ENCODE measurements at regions of chrX and their contacts with region 1.

Region 1: DNA sequence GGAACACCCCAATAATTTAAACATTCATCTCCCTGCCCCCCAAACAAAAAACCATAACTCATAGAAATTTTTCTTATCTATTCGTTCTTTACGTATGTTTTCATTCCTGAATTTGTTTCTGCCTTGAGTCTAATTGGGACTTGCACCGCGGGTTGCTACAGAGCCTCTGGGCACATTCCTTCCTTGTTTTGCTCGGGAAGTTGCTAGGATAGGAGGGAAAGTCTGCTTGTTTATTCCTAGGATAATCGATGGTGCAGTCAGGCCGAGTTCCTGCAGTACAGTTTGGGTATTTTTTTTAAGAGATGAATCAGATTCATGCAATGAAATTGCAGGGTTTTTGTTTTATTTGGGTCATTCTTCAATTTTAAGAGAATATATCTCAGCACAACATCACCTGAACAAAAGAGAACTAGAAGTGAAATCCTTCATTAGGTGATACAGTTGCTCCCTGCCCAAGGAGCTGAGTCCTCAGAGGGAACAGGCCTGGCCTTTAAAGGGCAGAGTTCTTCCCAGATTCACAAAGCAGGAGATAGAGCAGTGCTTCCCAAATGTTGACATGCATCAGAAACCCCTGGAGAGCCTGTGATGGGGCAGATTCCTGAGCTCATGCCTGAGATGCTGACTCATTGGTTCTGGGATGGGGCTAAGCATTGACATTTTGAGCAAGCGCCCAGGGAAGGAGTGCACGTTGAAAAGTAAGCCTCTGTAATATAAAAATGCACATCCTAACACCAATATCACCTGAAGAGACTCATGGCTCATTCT is 114.9 kb upstream of the FAM9B start:
- DNase-seq: peak; percentile 41
- H3K4me3 ChIP-seq: no peak overlapping the region
- H3K27ac ChIP-seq: peak overlapping the region; percentile 21
- H3K4me1 ChIP-seq: peaks cover 29% of the 10 kb centered on the region
- H3K27me3 ChIP-seq: no peaks in the 10 kb centered on the region
- CTCF ChIP-seq: no peak

Region 2: DNA sequence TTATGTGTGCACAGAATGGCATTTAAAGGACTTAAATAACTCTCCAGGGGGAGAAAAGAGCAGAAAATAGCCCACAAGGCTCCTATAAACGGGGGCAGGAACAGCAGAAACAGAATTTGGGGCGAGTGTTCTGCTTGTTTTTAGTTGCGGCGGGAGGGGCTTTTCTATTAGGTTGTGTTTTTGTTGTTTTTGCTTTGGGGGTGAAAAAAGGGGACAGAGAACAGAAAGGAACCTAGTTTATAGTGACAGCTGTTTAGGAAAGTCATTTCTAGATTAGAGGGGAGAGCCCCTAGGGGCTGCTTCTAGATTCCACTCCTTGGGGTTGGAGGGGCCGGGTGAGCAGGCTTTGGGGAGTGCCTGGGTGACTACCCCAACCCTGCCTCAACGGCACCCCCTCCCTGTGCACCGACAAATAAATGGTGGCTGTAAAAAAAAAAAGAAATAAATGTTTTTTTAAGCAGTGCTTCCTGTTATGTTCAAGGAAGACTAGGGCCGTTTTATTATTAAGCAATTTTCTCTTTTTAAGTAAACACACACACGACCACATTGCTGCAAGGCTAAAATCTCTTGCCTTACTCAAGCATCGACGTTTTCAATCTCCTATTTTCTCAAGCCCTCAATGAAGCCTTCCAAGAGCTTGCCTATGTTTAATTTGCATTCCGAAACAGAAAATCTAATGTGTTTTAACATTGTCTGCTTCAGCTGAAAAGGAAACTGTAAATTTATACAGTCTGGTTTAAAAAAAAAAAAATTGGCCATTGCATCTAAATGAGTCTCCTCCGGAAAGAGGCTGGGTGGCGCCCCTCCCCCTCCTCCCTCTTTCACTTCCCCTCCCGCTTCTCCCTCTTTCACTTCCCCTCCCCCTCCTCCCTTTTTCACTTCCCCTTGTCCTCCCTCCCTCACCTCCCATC is 192.7 kb after region 1 on chrX:
- CTCF ChIA-PET with region 1: no interaction called
- POLR2A ChIA-PET with region 1: no interaction called
- intact Hi-C with region 1: loop called (anchors 10 kb)
- DNase-seq: peak; percentile 89
- H3K4me3 ChIP-seq: peak overlapping the region; percentile 23
- H3K27ac ChIP-seq: peak overlapping the region; percentile 80
- H3K4me1 ChIP-seq: peaks cover 26% of the 10 kb centered on the region
- H3K27me3 ChIP-seq: no peaks in the 10 kb centered on the region
- CTCF ChIP-seq: no peak; the same call in 1 of the 2 replicates